ENCODE measurements at regions of chr17 and their contacts with region 1.

Region 1: DNA sequence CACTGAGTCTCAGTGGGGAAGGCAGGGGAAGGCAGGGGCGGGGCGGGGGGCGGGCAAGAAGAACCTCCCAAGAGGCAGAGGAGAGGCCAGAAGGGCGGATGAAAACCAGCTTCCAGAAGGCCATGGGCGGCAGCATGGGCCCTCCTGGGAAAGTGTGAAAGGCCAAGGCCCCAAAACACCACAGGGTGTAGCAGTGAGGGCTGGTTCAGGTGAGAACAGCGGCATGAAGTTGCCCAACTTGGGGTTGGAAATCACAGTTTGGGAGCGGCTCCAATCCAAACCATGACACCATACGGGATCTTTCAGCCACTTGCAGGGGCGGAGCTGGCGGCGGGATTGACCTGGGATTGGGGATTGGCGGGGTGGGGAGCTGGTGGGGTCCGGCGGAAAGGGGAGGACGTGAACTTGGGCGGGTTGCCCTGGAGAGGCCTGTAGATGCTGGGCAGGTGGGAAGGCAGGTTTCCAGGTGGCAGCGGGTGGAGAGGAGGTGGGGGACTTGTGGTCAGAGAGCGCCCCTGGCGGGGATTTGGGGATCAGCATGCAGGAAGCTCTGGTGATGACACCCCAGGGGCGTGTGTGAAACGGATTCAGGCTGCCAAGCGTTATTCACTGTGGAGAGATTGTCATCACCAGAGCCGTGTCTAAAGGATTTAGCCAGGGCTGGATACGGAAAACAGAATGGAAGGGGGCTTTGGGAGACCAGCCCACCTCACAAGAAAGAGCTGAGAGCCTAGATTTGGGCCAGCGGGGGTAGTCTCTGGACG is 80.9 kb downstream of the ARHGAP23 start:
- DNase-seq: peak; percentile 68 to 94 (median 86)
- H3K4me3 ChIP-seq: peak overlapping the region in 43 of 59 donors; percentile 5 to 51 (median 35)
- H3K27ac ChIP-seq: peak overlapping the region in 49 of 59 donors; percentile 12 to 85 (median 68)
- H3K27me3 ChIP-seq: no peaks in the 10 kb centered on the region
- CTCF ChIP-seq: peak; percentile 39 to 86 (median 68)

Region 2: DNA sequence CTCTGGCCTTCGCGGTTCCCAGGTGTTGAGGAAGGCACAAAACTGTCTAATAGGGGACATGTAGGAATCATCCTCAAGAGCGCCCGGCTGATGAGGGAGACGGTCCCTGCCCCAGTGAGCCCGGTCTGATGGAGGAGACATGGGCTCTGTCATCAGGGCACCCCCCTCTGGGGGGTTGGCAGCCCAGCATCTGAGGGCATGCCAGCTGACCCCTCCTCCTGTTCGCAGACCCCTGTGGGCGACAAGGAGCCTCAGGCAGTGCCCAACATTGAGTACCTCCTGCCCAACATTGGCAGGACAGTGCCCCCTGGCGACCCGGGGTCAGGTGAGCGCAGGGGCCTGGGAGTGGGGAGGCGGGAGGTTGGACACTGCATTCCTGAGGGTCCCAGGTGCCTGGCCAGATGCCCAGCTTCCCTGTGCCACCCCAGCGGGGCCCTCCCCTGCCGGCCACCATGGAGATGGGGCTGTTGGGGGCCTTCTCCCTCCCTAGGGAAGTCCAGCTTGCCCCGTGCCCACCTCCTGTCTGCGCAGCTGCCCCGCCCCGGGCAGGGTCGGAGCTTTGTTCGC is 10.9 kb before region 1 on chr17:
- intact Hi-C with region 1: no loop called
- DNase-seq: no peak
- H3K4me3 ChIP-seq: no peak overlapping the region
- H3K27ac ChIP-seq: peak overlapping the region in 1 of 59 donors; percentile 48
- H3K27me3 ChIP-seq: no peaks in the 10 kb centered on the region
- CTCF ChIP-seq: no peak

Region 3: DNA sequence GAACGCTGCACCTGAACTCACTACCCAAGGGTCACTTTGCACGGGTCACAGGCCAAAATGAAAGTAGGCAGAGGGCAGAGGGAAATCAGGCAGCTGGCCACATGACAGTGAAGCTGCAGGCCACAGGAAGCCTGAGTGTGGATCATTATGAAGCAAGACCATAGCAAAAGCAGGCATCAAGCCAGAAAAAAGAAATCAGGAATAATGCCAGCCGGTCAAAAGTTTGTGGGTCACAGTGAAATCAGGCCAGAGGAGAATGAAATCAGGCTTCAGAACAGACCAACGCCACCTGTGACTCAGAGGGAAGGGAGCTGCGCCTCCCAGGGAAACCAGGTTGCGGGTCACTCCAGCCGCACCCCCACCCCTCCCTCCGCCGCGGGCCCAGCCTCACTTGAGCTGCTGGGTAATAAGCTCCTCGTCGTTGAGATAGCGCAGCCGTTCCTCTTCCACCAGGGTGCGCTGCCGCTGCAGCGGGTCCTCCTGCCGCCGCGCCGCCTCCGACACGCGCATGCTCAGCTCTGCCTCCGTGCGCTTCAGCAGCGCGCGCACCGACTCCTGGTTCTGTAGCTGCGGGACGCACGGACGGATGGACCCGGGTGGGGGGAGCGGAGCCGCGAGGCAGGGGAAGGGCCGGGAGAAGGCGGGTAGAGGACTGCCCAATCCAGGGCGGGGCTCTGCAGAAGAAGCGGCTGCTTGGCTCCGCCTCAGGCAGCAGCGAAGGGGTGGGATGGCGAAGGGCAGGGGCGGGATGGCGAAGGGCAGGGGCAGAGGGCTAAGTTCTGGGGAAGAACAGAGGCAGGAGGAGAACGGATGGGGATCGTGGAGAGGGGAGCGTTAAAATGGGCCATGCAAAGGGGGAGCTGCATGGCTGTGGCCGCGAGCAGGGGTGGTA is 48.9 kb after region 1 on chr17:
- intact Hi-C with region 1: loop called in 1 of 2 experiments (anchors 5 kb)
- DNase-seq: peak; percentile 82 to 93 (median 90)
- H3K4me3 ChIP-seq: peak overlapping the region in 57 of 59 donors; percentile 14 to 61 (median 43)
- H3K27ac ChIP-seq: peak overlapping the region; percentile 37 to 99 (median 80)
- H3K27me3 ChIP-seq: peaks cover 0 to 9% (median 0%) of the 10 kb centered on the region in 45 donors
- CTCF ChIP-seq: peak; percentile 34 to 100 (median 95)